ENCODE measurements at regions of chr6 and their contacts with region 1.

Region 1: GRCh38 chr6:138817822-138818308 is 22.0 kb downstream of the ECT2L start:
- DNase-seq: peak; percentile 50
- H3K4me3 Mint-ChIP-seq: no peak overlapping the region
- H3K27ac Mint-ChIP-seq: peak overlapping the region; percentile 50
- H3K4me1 Mint-ChIP-seq: peaks cover 30% of the 10 kb centered on the region
- H3K27me3 Mint-ChIP-seq: peaks cover 3% of the 10 kb centered on the region

Region 2: GRCh38 chr6:138719011-138719635 is 98.7 kb before region 1 on chr6:
- CTCF ChIA-PET with region 1: no interaction called
- POLR2A ChIA-PET with region 1: no interaction called
- intact Hi-C with region 1: no loop called
- DNase-seq: no peak
- H3K4me3 Mint-ChIP-seq: no peak overlapping the region
- H3K27ac Mint-ChIP-seq: no peak overlapping the region
- H3K4me1 Mint-ChIP-seq: no peaks in the 10 kb centered on the region
- H3K27me3 Mint-ChIP-seq: peaks cover 16% of the 10 kb centered on the region

Region 3: DNA sequence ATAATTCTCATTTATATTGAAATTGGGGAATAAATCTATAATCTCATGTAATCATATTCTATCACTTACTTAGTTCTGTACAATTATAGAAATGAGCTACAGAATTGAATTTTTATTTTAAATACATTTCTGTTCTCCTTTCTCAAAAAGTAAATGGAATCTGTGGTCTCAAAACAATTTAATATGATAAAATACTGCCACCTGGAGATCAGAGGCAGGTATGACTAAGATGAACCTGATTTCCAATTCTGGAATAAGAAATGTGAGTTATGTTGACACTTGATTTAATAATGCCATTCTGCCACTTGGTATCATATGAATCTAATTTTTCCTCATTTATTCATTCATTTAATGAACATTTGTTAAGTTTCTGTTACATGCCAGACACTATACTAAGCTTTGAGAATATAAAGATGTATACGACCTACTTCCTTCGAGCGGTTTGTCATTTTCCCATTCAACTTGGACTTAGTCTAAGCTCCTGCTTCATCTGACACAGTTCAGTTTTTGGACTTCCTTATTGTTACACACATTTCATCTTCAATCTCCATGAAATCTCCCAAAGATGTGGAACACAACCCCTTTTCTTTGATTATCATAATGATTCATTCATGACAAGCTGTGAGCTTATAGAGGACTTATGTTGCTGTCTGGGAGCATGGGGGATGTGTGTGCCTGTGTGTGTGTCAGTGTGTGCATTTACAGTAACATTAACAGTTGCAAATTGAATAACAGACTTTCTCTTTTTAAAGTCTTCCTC is 51.8 kb before region 1 on chr6:
- CTCF ChIA-PET with region 1: no interaction called
- POLR2A ChIA-PET with region 1: no interaction called
- intact Hi-C with region 1: no loop called
- DNase-seq: no peak
- H3K4me3 Mint-ChIP-seq: no peak overlapping the region
- H3K27ac Mint-ChIP-seq: no peak overlapping the region
- H3K4me1 Mint-ChIP-seq: peaks cover 9% of the 10 kb centered on the region
- H3K27me3 Mint-ChIP-seq: no peaks in the 10 kb centered on the region

Region 4: DNA sequence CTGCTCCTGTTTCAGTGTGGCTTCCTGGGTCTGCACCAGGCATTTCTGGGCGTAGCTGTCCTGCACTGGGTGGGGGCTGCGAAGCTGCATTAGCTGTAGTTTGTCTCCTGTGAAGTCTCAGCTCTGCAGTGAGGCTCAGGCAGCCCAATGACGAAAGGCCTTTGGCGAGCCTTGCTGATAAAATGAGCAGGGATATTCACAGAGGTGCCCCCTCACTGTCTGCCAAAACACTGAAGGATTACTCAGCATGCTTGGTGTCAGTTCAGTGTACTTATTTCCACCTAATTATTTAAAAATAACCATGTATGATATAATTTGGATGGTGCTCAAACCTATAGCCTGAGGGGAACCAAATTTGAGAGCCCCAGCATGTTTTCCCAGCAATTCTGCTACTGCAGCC is 51.5 kb after region 1 on chr6:
- CTCF ChIA-PET with region 1: no interaction called
- POLR2A ChIA-PET with region 1: no interaction called
- intact Hi-C with region 1: loop called (anchors 2 kb)
- DNase-seq: no peak
- H3K4me3 Mint-ChIP-seq: no peak overlapping the region
- H3K27ac Mint-ChIP-seq: no peak overlapping the region
- H3K4me1 Mint-ChIP-seq: peaks cover 8% of the 10 kb centered on the region
- H3K27me3 Mint-ChIP-seq: peaks cover 6% of the 10 kb centered on the region

Region 5: GRCh38 chr6:138944412-138944811 is 126.5 kb after region 1 on chr6:
- CTCF ChIA-PET with region 1: no interaction called
- POLR2A ChIA-PET with region 1: no interaction called
- intact Hi-C with region 1: loop called (anchors 2 kb)
- DNase-seq: peak; percentile 62
- H3K4me3 Mint-ChIP-seq: no peak overlapping the region
- H3K27ac Mint-ChIP-seq: no peak overlapping the region
- H3K4me1 Mint-ChIP-seq: peaks cover 43% of the 10 kb centered on the region
- H3K27me3 Mint-ChIP-seq: no peaks in the 10 kb centered on the region

Region 6: GRCh38 chr6:138987640-138988468 is 170.0 kb after region 1 on chr6 and contains the start of gene REPS1:
- CTCF ChIA-PET with region 1: interaction called, 67 read pairs
- POLR2A ChIA-PET with region 1: interaction called, 4 read pairs
- intact Hi-C with region 1: loop called (anchors 1 kb)
- DNase-seq: peak; percentile 94
- H3K4me3 Mint-ChIP-seq: peak within 1 kb of the TSS; percentile 85
- H3K27ac Mint-ChIP-seq: peak within 1 kb of the TSS; percentile 89
- H3K4me1 Mint-ChIP-seq: peaks cover 19% of the 10 kb centered on the region
- H3K27me3 Mint-ChIP-seq: no peaks in the 10 kb centered on the region
- total RNA-seq, gene REPS1: 50.7 to 57.9 TPM

Region 7: DNA sequence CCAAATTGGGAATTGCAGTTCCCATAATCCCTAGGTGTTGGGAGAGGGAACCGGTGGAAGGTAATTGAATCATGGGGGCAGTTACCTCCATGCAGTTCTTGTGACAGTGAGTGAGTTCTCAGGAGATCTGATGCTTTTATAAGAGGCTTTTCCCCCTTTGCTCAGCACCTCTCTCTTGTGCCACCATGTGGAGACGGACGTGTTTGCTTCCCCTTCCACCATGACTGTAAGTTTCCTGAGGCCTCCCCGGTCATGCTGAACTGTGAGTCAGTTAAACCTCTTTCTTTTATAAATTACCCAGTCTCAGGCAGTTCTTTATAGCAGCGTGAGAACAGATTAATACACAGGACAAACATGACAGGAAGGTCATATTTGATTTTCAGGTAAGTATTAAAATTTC is 291.7 kb after region 1 on chr6:
- CTCF ChIA-PET with region 1: no interaction called
- POLR2A ChIA-PET with region 1: interaction called, 3 read pairs
- intact Hi-C with region 1: loop called (anchors 2 kb)
- DNase-seq: peak; percentile 72
- H3K4me3 Mint-ChIP-seq: no peak overlapping the region
- H3K27ac Mint-ChIP-seq: no peak overlapping the region
- H3K4me1 Mint-ChIP-seq: peaks cover 47% of the 10 kb centered on the region
- H3K27me3 Mint-ChIP-seq: no peaks in the 10 kb centered on the region

Region 8: DNA sequence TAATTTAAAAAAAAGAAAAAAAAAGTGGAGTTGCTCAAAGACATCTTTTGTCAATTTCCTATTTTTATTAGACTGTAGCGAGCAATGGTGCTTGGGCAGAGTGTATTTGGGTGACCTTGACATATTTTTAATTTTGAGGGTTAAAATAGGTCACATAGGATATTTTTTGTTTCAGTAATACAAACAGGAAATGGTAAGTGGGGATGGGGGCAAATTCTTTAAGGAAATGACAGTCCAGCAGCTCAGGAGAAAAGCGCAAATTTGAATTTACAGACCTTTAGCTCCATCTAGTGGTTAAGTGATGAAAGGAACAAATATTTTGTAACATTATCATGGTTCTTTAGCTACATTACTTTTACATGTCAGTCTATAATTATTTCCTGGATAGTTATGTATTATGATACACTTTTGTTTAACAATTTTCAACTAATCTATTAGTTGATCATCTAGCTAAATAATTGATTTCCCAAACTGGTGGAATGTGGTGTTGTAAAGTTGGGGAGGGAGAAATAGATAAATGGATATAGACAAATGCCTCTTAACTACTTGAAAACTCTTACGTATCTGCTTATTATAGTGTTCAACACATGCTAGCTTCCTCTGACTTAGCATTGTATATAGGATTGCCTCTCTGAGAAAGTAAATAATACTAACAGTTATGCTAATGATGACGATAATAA is 546.6 kb after region 1 on chr6:
- CTCF ChIA-PET with region 1: interaction called, 15 read pairs
- POLR2A ChIA-PET with region 1: no interaction called
- intact Hi-C with region 1: loop called (anchors 1 kb)
- DNase-seq: no peak
- H3K4me3 Mint-ChIP-seq: no peak overlapping the region
- H3K27ac Mint-ChIP-seq: no peak overlapping the region
- H3K4me1 Mint-ChIP-seq: peaks cover 27% of the 10 kb centered on the region
- H3K27me3 Mint-ChIP-seq: no peaks in the 10 kb centered on the region